ENCODE measurements at regions of chrX and their contacts with region 1.

Region 1: GRCh38 chrX:124388562-124388961 is 42.2 kb downstream of the SH2D1A start:
- DNase-seq: peak in 8 of 9 donors; percentile 7 to 68 (median 53)
- ATAC-seq: peak; percentile 76
- H3K4me3 ChIP-seq: no peak overlapping the region
- H3K4me3 Mint-ChIP-seq: no peak overlapping the region
- H3K27ac ChIP-seq: no peak overlapping the region
- H3K27ac Mint-ChIP-seq: peak overlapping the region in 2 of 9 donors; percentile 32 to 62
- H3K4me1 ChIP-seq: no peaks in the 10 kb centered on the region
- H3K4me1 Mint-ChIP-seq: peaks cover 1 to 30% (median 19%) of the 10 kb centered on the region in 7 donors
- H3K27me3 ChIP-seq: no peaks in the 10 kb centered on the region
- H3K27me3 Mint-ChIP-seq: no peaks in the 10 kb centered on the region

Region 2: DNA sequence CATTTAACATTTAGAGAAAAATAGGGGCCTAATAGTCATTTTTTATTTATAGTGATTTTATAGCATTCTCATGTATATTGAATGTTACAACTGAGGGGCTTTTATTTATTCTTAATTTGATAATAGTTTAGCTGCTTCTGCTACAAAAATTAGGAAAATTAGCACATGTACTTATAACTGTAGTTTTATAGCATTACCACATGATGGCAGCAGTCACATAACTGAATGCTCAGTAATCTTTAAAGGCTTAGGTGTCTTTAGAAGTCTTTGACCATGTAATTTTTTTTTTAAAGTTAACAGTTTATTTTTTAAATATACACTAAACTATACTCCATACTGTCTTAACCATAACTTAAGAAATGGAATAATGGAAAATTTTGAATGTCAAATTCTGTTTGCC is 290.5 kb before region 1 on chrX:
- CTCF ChIA-PET with region 1: no interaction called
- POLR2A ChIA-PET with region 1: no interaction called
- intact Hi-C with region 1: loop called in 1 of 2 experiments (anchors 5 kb)
- DNase-seq: peak in 5 of 9 donors; percentile 8 to 34 (median 30)
- ATAC-seq: peak; percentile 55
- H3K4me3 ChIP-seq: no peak overlapping the region
- H3K4me3 Mint-ChIP-seq: no peak overlapping the region
- H3K27ac ChIP-seq: no peak overlapping the region
- H3K27ac Mint-ChIP-seq: no peak overlapping the region
- H3K4me1 ChIP-seq: no peaks in the 10 kb centered on the region
- H3K4me1 Mint-ChIP-seq: peaks cover 0 to 2% (median 0%) of the 10 kb centered on the region in 7 donors
- H3K27me3 ChIP-seq: no peaks in the 10 kb centered on the region
- H3K27me3 Mint-ChIP-seq: no peaks in the 10 kb centered on the region

Region 3: GRCh38 chrX:124736553-124737240 is 348.1 kb after region 1 on chrX:
- CTCF ChIA-PET with region 1: no interaction called
- POLR2A ChIA-PET with region 1: no interaction called
- intact Hi-C with region 1: loop called in 1 of 2 experiments (anchors 5 kb)
- DNase-seq: peak; percentile 15 to 78 (median 65)
- ATAC-seq: peak; percentile 88
- H3K4me3 ChIP-seq: peak overlapping the region; percentile 41
- H3K4me3 Mint-ChIP-seq: peak overlapping the region; percentile 70 to 83 (median 79)
- H3K27ac ChIP-seq: peak overlapping the region; percentile 39
- H3K27ac Mint-ChIP-seq: peak overlapping the region; percentile 81 to 93 (median 86)
- H3K4me1 ChIP-seq: peaks cover 10 to 17% of the 10 kb centered on the region in 2 donors
- H3K4me1 Mint-ChIP-seq: peaks cover 10 to 57% (median 45%) of the 10 kb centered on the region in 7 donors
- H3K27me3 ChIP-seq: no peaks in the 10 kb centered on the region
- H3K27me3 Mint-ChIP-seq: no peaks in the 10 kb centered on the region

Region 4: GRCh38 chrX:124863303-124863702 is 474.7 kb after region 1 on chrX:
- CTCF ChIA-PET with region 1: no interaction called
- POLR2A ChIA-PET with region 1: no interaction called
- intact Hi-C with region 1: loop called in 1 of 2 experiments (anchors 5 kb)
- DNase-seq: no peak
- ATAC-seq: no peak
- H3K4me3 ChIP-seq: no peak overlapping the region
- H3K4me3 Mint-ChIP-seq: no peak overlapping the region
- H3K27ac ChIP-seq: no peak overlapping the region
- H3K27ac Mint-ChIP-seq: no peak overlapping the region
- H3K4me1 ChIP-seq: no peaks in the 10 kb centered on the region
- H3K4me1 Mint-ChIP-seq: no peaks in the 10 kb centered on the region
- H3K27me3 ChIP-seq: no peaks in the 10 kb centered on the region
- H3K27me3 Mint-ChIP-seq: peaks cover 0 to 16% (median 0%) of the 10 kb centered on the region in 5 donors

Region 5: DNA sequence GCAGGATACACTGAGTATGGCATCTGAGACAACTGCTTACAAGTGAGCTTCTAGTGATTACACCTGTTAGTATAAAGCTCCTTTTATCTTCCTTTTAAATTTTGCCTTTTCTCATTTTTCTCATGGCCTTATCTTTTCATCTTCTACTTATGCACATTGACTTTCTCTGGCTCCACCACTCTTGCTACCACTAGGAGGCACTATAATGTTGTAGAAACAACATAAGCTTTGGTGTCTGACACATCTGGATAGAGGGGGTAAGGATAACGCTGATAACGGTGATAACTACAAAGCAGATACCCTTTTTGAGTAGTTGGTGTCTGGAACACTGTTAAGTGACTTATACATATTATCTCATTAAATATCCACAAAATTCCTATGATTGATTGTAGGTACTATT is 743.7 kb after region 1 on chrX:
- CTCF ChIA-PET with region 1: interaction called, 3 read pairs
- POLR2A ChIA-PET with region 1: no interaction called
- intact Hi-C with region 1: loop called in 1 of 2 experiments (anchors 5 kb)
- DNase-seq: peak in 1 of 9 donors; percentile 2
- ATAC-seq: no peak
- H3K4me3 ChIP-seq: no peak overlapping the region
- H3K4me3 Mint-ChIP-seq: no peak overlapping the region
- H3K27ac ChIP-seq: no peak overlapping the region
- H3K27ac Mint-ChIP-seq: no peak overlapping the region
- H3K4me1 ChIP-seq: no peaks in the 10 kb centered on the region
- H3K4me1 Mint-ChIP-seq: no peaks in the 10 kb centered on the region
- H3K27me3 ChIP-seq: no peaks in the 10 kb centered on the region
- H3K27me3 Mint-ChIP-seq: no peaks in the 10 kb centered on the region